ENCODE measurements at regions of chr2 and their contacts with region 1.

Region 1: DNA sequence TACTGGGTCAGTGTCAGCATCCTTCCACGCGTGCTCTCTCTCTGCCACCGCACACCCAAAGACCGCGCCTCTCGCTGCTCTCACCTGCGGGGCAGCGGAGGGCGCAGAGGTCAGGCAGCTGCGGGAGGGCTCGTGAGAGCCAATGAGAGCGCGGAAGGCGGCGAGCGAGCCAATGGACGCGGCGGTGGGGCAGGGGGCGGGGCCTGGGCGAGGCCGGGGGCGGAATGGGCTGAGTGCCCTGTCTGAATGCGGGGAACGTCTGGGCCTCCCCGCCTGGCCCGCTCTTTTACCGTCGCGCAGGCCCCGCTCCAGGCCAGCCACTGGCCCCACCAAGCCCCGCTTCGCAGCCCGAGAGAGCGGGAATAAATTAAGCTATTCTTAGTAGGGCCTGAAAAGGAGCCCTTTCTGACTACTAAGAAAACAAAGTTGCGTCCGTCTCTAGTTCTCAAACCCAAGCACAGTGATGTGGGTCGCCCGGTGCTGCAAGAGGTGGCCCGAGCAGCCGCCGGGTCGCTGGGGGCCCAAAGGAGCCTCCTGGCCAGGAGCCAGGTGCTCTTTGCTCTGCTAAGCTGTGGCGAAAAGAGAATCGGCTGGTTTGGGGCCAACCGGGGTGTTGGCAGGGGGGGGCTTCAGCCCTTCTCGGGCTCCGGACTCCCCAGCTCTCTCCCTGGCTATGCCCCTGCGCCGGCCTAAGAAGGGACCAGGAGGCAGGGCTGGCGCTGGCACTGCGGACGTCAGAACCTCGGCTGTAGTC is 81.1 kb upstream of the GLI2 start:
- DNase-seq: no peak
- ATAC-seq: peak; percentile 86

Region 2: GRCh38 chr2:120566331-120567035 is 88.1 kb before region 1 on chr2:
- intact Hi-C with region 1: loop called (anchors 5 kb)
- DNase-seq: peak; percentile 89
- ATAC-seq: peak; percentile 93

Region 3: GRCh38 chr2:120596990-120597594 is 57.5 kb before region 1 on chr2:
- intact Hi-C with region 1: no loop called
- DNase-seq: peak; percentile 74
- ATAC-seq: peak; percentile 65